HCT116 (cell line): ENCODE measurements at regions of chr22 and their contacts with region 1.

Region 1: DNA sequence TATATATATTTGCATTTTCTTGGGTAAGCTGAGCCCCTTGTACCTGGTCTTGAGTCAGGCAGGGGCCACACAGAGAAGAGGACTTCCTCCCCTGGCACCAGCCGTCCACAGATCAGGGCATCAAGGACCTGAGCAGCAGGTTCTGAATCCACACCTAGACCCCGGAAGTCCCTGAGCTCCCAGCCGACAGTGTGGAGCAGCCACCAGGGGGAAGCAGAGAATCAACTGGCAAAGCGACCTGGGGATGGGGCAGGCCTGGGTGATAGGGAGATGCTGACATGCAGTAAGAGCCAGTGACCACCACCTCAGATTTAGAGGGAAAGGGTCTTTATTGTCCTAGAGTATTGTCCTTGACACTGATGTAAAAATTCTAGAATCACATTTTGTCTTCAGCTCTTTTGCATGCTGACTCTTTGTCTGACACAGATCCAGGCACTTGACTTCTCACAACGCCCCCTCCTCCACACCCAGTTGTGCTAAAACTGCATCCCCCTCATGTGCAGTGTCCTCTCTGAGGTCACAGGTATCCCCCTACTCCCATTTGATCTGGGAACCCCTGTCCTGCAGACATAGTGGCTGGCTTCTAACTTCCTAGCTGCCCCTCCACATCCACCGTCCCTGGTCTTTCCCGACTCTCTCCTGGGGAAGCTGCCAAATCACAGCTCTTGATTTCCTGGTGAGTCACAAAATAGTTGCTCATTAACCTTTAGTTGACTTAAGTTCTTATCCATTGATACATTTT is 109.3 kb downstream of the GGTLC2 start:
- DNase-seq: peak; percentile 47
- ATAC-seq: peak; percentile 99
- H3K4me3 ChIP-seq: no peak overlapping the region
- H3K27ac ChIP-seq: no peak overlapping the region
- H3K4me1 ChIP-seq: peaks cover 0 to 4% of the 10 kb centered on the region in 2 experiments; a peak in 1 of 4 replicates
- H3K27me3 ChIP-seq: no peaks in the 10 kb centered on the region
- CTCF ChIP-seq: peak; percentile 59 to 93 (median 81)
- POLR2A ChIP-seq: no peak
- RAD21 ChIP-seq: peak; percentile 53

Region 2: GRCh38 chr22:22742641-22743040 is 11.1 kb before region 1 on chr22:
- CTCF ChIA-PET with region 1: interaction called, 18 read pairs
- POLR2A ChIA-PET with region 1: no interaction called
- RAD21 ChIA-PET with region 1: no interaction called
- intact Hi-C with region 1: no loop called
- DNase-seq: no peak
- ATAC-seq: no peak
- H3K4me3 ChIP-seq: no peak overlapping the region
- H3K27ac ChIP-seq: no peak overlapping the region
- H3K4me1 ChIP-seq: no peaks in the 10 kb centered on the region
- H3K27me3 ChIP-seq: peaks cover 58% of the 10 kb centered on the region
- CTCF ChIP-seq: no peak
- POLR2A ChIP-seq: no peak
- RAD21 ChIP-seq: no peak

Region 3: GRCh38 chr22:22770280-22770871 is 16.7 kb after region 1 on chr22:
- CTCF ChIA-PET with region 1: interaction called, 22 read pairs
- POLR2A ChIA-PET with region 1: interaction called, 4 read pairs
- RAD21 ChIA-PET with region 1: interaction called in 1 of 2 experiments, 4 read pairs
- intact Hi-C with region 1: no loop called
- DNase-seq: no peak
- ATAC-seq: peak; percentile 96
- H3K4me3 ChIP-seq: no peak overlapping the region
- H3K27ac ChIP-seq: no peak overlapping the region
- H3K4me1 ChIP-seq: no peaks in the 10 kb centered on the region
- H3K27me3 ChIP-seq: peaks cover 8% of the 10 kb centered on the region; the same call in 1 of the 2 replicates
- CTCF ChIP-seq: peak; percentile 59 to 94 (median 90); a peak in 5 of 6 replicates
- POLR2A ChIP-seq: no peak
- RAD21 ChIP-seq: peak; percentile 38; the same call in 1 of the 2 replicates

Region 4: GRCh38 chr22:22802339-22802970 is 48.8 kb after region 1 on chr22:
- CTCF ChIA-PET with region 1: no interaction called
- POLR2A ChIA-PET with region 1: no interaction called
- RAD21 ChIA-PET with region 1: no interaction called
- intact Hi-C with region 1: no loop called
- DNase-seq: no peak
- ATAC-seq: no peak
- H3K4me3 ChIP-seq: no peak overlapping the region
- H3K27ac ChIP-seq: no peak overlapping the region
- H3K4me1 ChIP-seq: no peaks in the 10 kb centered on the region
- H3K27me3 ChIP-seq: no peaks in the 10 kb centered on the region
- CTCF ChIP-seq: peak in 2 of 3 experiments; percentile 34 to 56; a peak in 3 of 6 replicates
- POLR2A ChIP-seq: no peak
- RAD21 ChIP-seq: no peak

Region 5: GRCh38 chr22:23204541-23205157 is 451.0 kb after region 1 on chr22:
- CTCF ChIA-PET with region 1: no interaction called
- POLR2A ChIA-PET with region 1: no interaction called
- RAD21 ChIA-PET with region 1: no interaction called
- intact Hi-C with region 1: no loop called
- DNase-seq: no peak
- ATAC-seq: no peak
- H3K4me3 ChIP-seq: no peak overlapping the region
- H3K27ac ChIP-seq: no peak overlapping the region
- H3K4me1 ChIP-seq: peaks cover 0 to under 1% of the 10 kb centered on the region in 2 experiments; a peak in 1 of 4 replicates
- H3K27me3 ChIP-seq: no peaks in the 10 kb centered on the region
- CTCF ChIP-seq: no peak
- POLR2A ChIP-seq: no peak
- RAD21 ChIP-seq: no peak